Mammary epithelial cell (primary cell): ENCODE measurements at regions of chr1 and their contacts with region 1.

Region 1: DNA sequence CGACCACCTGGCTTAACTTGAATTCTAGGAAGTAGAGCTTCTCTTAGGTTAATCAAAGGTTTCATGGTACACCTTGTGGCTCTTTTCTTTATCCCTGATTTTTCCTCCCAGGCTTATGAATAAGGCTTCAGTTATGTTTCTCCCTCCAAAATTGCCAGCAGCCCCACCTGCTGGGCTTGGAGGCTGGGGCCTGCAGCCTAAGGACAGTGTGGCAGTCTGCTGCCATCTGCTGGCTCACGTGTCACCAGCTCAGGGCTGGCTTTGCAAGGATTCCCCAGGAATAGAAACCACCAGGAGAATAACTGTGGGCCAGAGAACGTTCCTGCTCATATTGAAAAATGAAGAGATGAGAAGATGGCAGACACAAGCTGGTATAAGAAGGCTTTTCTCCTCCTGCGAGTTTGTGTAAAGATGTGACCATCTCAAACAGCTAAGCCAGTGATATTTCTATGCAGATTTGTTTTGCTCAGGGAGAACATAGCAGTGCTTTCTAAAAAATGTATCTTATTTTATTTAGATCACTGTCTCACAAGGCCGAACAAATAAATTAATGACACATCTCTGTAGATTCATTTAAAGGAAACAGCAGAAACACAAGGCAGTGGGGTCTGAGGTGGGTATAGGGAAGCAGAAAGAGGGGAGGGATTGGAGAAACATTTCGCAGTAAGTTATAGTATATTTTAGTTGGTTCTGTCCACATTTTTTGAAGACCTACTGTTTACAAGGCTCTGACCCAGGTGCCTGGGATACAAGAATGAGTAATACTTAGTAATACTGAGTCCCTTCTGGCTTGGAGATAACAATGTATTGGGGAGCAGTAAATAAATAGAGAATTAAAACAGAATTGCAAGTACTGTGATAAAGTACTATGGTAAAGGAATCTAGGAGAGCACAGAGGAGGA is 291.1 kb upstream of the SGIP1 start:
- DNase-seq: peak; percentile 77
- H3K4me3 ChIP-seq: no peak overlapping the region
- H3K27ac ChIP-seq: no peak overlapping the region
- H3K4me1 ChIP-seq: peaks cover 11% of the 10 kb centered on the region
- H3K27me3 ChIP-seq: peaks cover 4% of the 10 kb centered on the region
- CTCF ChIP-seq: peak; percentile 98 to 100

Region 2: GRCh38 chr1:65235867-65236805 is 1006.8 kb before region 1 on chr1:
- CTCF ChIA-PET with region 1: no interaction called
- dilution Hi-C with region 1: no loop called
- in situ Hi-C with region 1: no loop called
- intact Hi-C with region 1: loop called (anchors 10 kb)
- DNase-seq: peak; percentile 33
- H3K4me3 ChIP-seq: no peak overlapping the region
- H3K27ac ChIP-seq: no peak overlapping the region
- H3K4me1 ChIP-seq: peaks cover under 1% of the 10 kb centered on the region
- H3K27me3 ChIP-seq: no peaks in the 10 kb centered on the region
- CTCF ChIP-seq: peak; percentile 60 to 61

Region 3: DNA sequence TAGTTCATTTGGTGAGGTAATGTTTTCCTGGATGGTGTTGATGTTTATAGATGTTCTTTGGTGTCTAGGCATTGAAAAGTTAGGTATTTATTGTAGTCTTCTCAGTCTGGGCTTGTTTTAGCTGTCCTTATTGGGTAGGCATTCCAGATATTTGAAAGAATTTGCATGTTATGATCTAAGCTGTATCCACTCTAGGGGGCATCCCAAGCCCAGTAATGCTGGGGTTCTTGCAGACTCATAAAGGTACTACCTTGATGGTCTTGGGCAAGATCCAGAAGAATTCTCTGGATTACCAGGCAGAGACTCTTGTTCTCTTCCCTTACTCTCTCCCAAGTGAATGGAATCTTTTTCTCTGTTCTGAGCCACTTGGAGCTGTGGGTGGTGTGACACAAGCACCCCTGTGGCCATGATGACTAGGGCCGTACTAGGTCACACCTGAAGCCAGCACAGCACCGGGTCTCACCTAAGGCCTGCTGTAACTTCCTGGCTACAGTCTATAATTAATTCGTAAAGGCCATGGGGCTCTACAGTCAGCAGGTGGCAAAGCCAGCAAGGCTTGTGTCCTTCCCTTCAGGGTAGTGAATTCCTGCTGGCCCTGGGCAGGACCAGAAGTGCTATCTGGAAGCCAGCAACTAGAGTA is 525.0 kb before region 1 on chr1:
- CTCF ChIA-PET with region 1: no interaction called
- dilution Hi-C with region 1: no loop called
- in situ Hi-C with region 1: no loop called
- intact Hi-C with region 1: loop called (anchors 10 kb)
- DNase-seq: no peak
- H3K4me3 ChIP-seq: no peak overlapping the region
- H3K27ac ChIP-seq: no peak overlapping the region
- H3K4me1 ChIP-seq: no peaks in the 10 kb centered on the region
- H3K27me3 ChIP-seq: no peaks in the 10 kb centered on the region
- CTCF ChIP-seq: peak in 1 of 2 donors; percentile 8

Region 4: GRCh38 chr1:65952696-65953095 is 290.2 kb before region 1 on chr1:
- CTCF ChIA-PET with region 1: no interaction called
- dilution Hi-C with region 1: no loop called
- in situ Hi-C with region 1: loop called (anchors 5 to 10 kb)
- intact Hi-C with region 1: no loop called
- DNase-seq: no peak
- H3K4me3 ChIP-seq: no peak overlapping the region
- H3K27ac ChIP-seq: no peak overlapping the region
- H3K4me1 ChIP-seq: no peaks in the 10 kb centered on the region
- H3K27me3 ChIP-seq: no peaks in the 10 kb centered on the region
- CTCF ChIP-seq: no peak